ENCODE measurements at regions of chr6 and their contacts with region 1.

Region 1: GRCh38 chr6:148578245-148578732 is 168.5 kb upstream of the UST start:
- DNase-seq: peak; percentile 83
- ATAC-seq: peak; percentile 100
- H3K4me3 ChIP-seq: no peak overlapping the region
- H3K4me3 Mint-ChIP-seq: no peak overlapping the region
- H3K27ac ChIP-seq: no peak overlapping the region
- H3K27ac Mint-ChIP-seq: no peak overlapping the region
- H3K4me1 ChIP-seq: peaks cover 0 to 5% of the 10 kb centered on the region in 2 donors
- H3K4me1 Mint-ChIP-seq: peaks cover 5% of the 10 kb centered on the region
- H3K27me3 ChIP-seq: no peaks in the 10 kb centered on the region
- H3K27me3 Mint-ChIP-seq: peaks cover 3% of the 10 kb centered on the region
- CTCF ChIP-seq: peak; percentile 86

Region 2: DNA sequence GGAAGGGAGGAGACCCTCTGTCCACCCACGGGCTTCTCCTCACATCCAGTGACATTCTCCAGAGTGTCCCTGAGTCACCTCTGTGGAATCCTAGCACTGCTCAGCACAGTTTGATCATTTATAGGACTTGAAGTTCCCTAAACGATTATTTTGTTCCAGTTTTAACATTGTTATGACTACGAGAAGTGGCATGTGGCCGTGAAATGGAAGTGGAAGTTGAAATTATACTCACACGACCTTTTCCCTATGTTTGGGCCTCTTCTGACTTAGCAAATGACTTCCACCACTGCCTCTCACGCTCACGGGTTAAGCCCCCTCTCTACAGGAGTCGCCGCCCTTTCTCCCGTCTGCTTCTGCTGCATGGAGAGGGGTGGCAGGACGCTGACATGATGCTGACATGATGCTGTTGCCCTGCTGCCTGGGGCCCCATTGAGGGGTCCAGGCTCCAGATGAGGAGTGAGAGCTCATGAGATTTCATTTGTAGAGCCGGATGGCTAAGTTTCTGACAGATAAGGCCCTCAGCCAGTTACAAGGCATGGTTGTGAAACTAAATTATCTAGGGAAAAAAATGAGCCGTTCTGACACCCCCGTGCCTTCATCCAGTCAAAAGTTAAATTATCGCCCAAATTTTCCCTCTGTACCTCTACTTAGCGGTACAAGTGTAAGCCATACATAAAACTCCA is 15.0 kb after region 1 on chr6:
- CTCF ChIA-PET with region 1: interaction called, 19 read pairs
- POLR2A ChIA-PET with region 1: no interaction called
- intact Hi-C with region 1: no loop called
- DNase-seq: no peak
- ATAC-seq: no peak
- H3K4me3 ChIP-seq: no peak overlapping the region
- H3K4me3 Mint-ChIP-seq: no peak overlapping the region
- H3K27ac ChIP-seq: no peak overlapping the region
- H3K27ac Mint-ChIP-seq: no peak overlapping the region
- H3K4me1 ChIP-seq: peaks cover 0 to 4% of the 10 kb centered on the region in 2 donors
- H3K4me1 Mint-ChIP-seq: peaks cover 4% of the 10 kb centered on the region
- H3K27me3 ChIP-seq: no peaks in the 10 kb centered on the region
- H3K27me3 Mint-ChIP-seq: no peaks in the 10 kb centered on the region
- CTCF ChIP-seq: no peak

Region 3: GRCh38 chr6:148738946-148739821 is 160.9 kb after region 1 on chr6:
- CTCF ChIA-PET with region 1: interaction called, 24 read pairs
- POLR2A ChIA-PET with region 1: no interaction called
- intact Hi-C with region 1: no loop called
- DNase-seq: no peak
- ATAC-seq: no peak
- H3K4me3 ChIP-seq: no peak overlapping the region
- H3K4me3 Mint-ChIP-seq: no peak overlapping the region
- H3K27ac ChIP-seq: peak overlapping the region in 1 of 2 donors; percentile 33
- H3K27ac Mint-ChIP-seq: no peak overlapping the region
- H3K4me1 ChIP-seq: peaks cover 11 to 15% of the 10 kb centered on the region in 2 donors
- H3K4me1 Mint-ChIP-seq: peaks cover 23% of the 10 kb centered on the region
- H3K27me3 ChIP-seq: no peaks in the 10 kb centered on the region
- H3K27me3 Mint-ChIP-seq: no peaks in the 10 kb centered on the region
- CTCF ChIP-seq: no peak

Region 4: GRCh38 chr6:148866657-148867268 is 288.5 kb after region 1 on chr6:
- CTCF ChIA-PET with region 1: no interaction called
- POLR2A ChIA-PET with region 1: no interaction called
- intact Hi-C with region 1: loop called (anchors 5 kb)
- DNase-seq: peak; percentile 74
- ATAC-seq: peak; percentile 91
- H3K4me3 ChIP-seq: peak overlapping the region in 1 of 5 experiments; percentile 8
- H3K4me3 Mint-ChIP-seq: peak overlapping the region; percentile 80
- H3K27ac ChIP-seq: peak overlapping the region; percentile 48 to 57
- H3K27ac Mint-ChIP-seq: peak overlapping the region; percentile 89
- H3K4me1 ChIP-seq: peaks cover 45 to 55% of the 10 kb centered on the region in 2 donors
- H3K4me1 Mint-ChIP-seq: peaks cover 81% of the 10 kb centered on the region
- H3K27me3 ChIP-seq: no peaks in the 10 kb centered on the region
- H3K27me3 Mint-ChIP-seq: no peaks in the 10 kb centered on the region
- CTCF ChIP-seq: no peak

Region 5: GRCh38 chr6:148972481-148972880 is 394.2 kb after region 1 on chr6:
- CTCF ChIA-PET with region 1: interaction called, 19 read pairs
- POLR2A ChIA-PET with region 1: no interaction called
- intact Hi-C with region 1: no loop called
- DNase-seq: peak; percentile 83
- ATAC-seq: peak; percentile 95
- H3K4me3 ChIP-seq: no peak overlapping the region
- H3K4me3 Mint-ChIP-seq: peak overlapping the region; percentile 21
- H3K27ac ChIP-seq: no peak overlapping the region
- H3K27ac Mint-ChIP-seq: peak overlapping the region; percentile 60
- H3K4me1 ChIP-seq: peaks cover 10 to 17% of the 10 kb centered on the region in 2 donors
- H3K4me1 Mint-ChIP-seq: peaks cover 19% of the 10 kb centered on the region
- H3K27me3 ChIP-seq: no peaks in the 10 kb centered on the region
- H3K27me3 Mint-ChIP-seq: no peaks in the 10 kb centered on the region
- CTCF ChIP-seq: no peak

Region 6: GRCh38 chr6:149431905-149432775 is 853.9 kb after region 1 on chr6:
- CTCF ChIA-PET with region 1: interaction called, 33 read pairs
- POLR2A ChIA-PET with region 1: no interaction called
- intact Hi-C with region 1: no loop called
- DNase-seq: peak; percentile 87
- ATAC-seq: peak; percentile 92
- H3K4me3 ChIP-seq: no peak overlapping the region
- H3K4me3 Mint-ChIP-seq: peak overlapping the region; percentile 49
- H3K27ac ChIP-seq: no peak overlapping the region
- H3K27ac Mint-ChIP-seq: no peak overlapping the region
- H3K4me1 ChIP-seq: peaks cover 0 to 7% of the 10 kb centered on the region in 2 donors
- H3K4me1 Mint-ChIP-seq: peaks cover 7% of the 10 kb centered on the region
- H3K27me3 ChIP-seq: no peaks in the 10 kb centered on the region
- H3K27me3 Mint-ChIP-seq: no peaks in the 10 kb centered on the region
- CTCF ChIP-seq: peak; percentile 96